ENCODE measurements at regions of chr6 and their contacts with region 1.

Region 1: DNA sequence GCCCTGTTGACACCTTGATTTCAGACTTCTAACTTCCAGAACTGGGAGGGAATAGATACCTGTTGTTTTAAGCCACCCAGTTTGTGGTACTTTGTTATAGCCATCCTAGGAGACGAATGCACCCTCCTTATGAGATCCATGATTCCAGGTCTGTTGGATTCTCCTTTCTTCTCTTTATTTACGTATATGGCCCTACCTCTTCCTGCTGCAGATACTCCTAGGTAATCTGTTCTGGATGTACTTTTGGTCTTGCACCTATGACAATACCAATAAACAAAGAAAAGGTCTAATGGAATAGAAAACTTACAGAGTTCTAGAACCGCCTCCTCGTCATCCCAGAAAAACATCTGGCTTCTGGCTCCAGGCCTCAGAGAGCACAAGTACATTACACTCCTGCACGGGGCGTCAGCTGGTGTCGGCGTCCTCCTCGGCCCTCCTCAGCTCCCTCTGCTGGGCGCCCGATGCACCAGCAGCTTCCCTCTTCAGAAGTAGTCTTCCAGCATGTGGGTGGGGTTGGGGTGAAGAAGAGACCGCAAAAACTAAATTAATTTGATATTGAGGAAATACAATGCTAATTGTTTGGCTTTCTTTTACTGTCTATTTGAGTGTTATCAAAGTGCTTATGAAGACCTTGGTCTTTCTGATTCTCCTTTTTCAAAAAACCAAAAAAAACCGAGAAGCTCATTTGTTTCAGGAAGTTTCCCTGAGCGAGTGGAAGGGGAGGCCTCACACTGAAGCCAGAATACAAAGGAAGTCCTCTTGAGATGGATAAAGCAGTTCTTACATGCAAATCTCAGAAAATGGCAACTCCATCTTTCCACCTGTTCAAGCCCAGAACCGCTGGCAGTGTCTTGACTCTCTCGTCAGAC is 9.7 kb upstream of the ATXN1 start:
- DNase-seq: peak; percentile 78
- CTCF ChIP-seq: peak; percentile 94

Region 2: DNA sequence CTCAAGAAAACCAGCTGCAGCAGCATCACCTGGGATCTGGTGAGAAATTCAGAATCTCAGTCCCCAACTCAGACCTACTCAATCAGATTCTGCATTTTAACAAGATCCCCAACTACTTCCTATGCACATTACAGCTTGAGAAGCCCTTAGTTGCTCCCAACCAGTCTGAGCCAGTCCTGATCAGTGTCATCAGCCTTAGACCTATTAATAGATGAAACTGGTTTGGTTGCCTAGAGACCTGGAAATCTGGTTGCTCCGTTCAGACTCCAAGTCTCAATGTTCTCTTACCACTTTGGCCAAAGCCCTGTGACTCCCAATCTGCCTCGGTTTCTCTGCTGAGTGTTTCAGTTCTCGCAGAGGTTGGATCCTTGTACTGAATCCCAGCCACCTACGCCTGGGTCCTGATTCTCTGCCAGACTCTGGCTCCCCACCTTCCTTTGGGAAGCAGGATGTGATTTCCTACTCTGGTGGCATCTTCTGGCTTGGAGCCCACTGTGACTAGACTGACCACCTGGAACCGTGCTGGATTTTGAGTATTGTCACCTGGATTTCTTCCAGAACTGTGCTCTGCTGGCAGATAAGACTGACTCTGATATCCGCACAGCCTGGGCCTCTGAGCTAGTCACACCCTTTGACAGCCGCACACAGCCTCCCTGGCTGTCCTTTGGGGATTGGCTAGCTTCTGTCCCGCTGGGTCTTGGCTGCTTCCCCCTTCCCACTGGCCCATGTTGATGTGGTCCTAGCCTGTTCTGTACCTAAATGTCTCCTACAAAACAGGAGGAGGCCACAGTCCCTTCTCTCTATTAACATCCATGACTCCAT is 10.6 kb after region 1 on chr6:
- CTCF ChIA-PET with region 1: interaction called, 43 read pairs
- POLR2A ChIA-PET with region 1: no interaction called
- DNase-seq: no peak
- CTCF ChIP-seq: no peak

Region 3: GRCh38 chr6:17066610-17067009 is 295.7 kb after region 1 on chr6:
- CTCF ChIA-PET with region 1: no interaction called
- POLR2A ChIA-PET with region 1: no interaction called
- DNase-seq: peak; percentile 10
- CTCF ChIP-seq: no peak